HepG2 (cell line): ENCODE measurements at regions of chr22 and their contacts with region 1.

Region 1: GRCh38 chr22:37633625-37634416 is 5.6 kb upstream of the SH3BP1 start:
- DNase-seq: peak; percentile 85
- ATAC-seq: peak; percentile 67
- H3K4me3 ChIP-seq: peak overlapping the region; percentile 31 to 69 (median 51); a peak in 5 of 6 replicates
- H3K27ac ChIP-seq: peak overlapping the region; percentile 84
- H3K4me1 ChIP-seq: peaks cover 84% of the 10 kb centered on the region
- H3K27me3 ChIP-seq: no peaks in the 10 kb centered on the region
- CTCF ChIP-seq: peak; percentile 70
- EP300 ChIP-seq: peak in 1 of 2 experiments; percentile 4; a peak in 1 of 4 replicates
- POLR2A ChIP-seq: peak; percentile 51 to 76
- RAD21 ChIP-seq: 0 out of 2 replicates have a peak, but pooled peaks have one; percentile 15

Region 2: GRCh38 chr22:37623075-37624016 is 10.5 kb before region 1 on chr22:
- CTCF ChIA-PET with region 1: interaction called, 4 read pairs
- POLR2A ChIA-PET with region 1: interaction called, 4 read pairs
- in situ Hi-C with region 1: no loop called
- intact Hi-C with region 1: loop called (anchors 2 kb)
- DNase-seq: peak; percentile 50
- ATAC-seq: peak; percentile 73
- H3K4me3 ChIP-seq: 0 out of 6 replicates have a peak overlapping the region, but pooled peaks of 1 of the 3 experiments have one; percentile 3
- H3K27ac ChIP-seq: no peak overlapping the region
- H3K4me1 ChIP-seq: peaks cover 10% of the 10 kb centered on the region
- H3K27me3 ChIP-seq: no peaks in the 10 kb centered on the region; a peak in 1 of 5 replicates
- CTCF ChIP-seq: peak; percentile 78
- EP300 ChIP-seq: no peak
- POLR2A ChIP-seq: no peak
- RAD21 ChIP-seq: peak; percentile 71

Region 3: DNA sequence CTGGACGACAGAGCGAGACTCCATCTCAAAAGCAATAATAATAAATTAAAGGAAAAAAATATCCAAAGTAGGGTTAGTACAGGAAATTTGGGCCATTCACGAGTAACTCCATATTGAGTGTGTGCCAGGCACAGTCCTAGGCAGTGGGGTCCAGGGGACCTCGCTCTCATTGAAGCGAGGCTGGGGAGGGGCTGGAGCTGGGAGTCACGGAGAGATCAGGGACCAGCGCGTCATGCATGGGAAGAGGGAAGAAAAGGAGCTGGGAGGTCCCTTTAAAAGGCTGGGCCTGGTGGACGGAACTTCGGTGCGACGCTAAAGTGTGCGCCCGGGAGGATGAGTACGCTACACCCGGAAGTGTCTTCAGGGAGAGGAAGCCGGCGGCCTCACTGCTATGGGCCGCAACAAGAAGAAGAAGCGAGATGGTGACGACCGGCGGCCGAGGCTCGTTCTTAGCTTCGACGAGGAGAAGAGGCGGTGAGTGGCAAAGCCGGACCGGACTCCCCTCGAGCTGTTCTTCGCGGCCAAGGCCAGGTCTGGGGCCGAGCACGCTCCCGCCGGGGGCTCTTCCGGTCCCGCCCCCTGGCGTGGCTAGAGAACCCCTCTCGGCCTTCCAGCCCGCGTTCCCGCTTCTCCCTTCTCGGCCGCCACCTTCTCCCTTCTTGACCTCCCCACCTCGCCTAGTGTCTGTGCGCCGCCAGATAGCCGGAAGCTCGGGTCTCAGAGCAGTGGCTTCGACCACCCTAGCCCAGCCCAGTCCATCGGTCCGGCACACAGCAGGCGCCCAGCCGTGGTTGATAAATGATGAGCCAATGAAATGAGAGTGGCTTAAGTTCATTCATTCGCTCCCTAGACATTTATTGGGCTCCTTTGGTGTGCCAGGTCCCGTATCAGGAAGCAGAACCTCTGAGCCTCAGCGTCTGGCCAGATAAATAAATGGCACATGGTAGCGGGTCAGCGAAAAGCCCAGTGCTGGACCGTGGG is 52.5 kb after region 1 on chr22 and contains the start of gene NOL12:
- CTCF ChIA-PET with region 1: interaction called, 3 read pairs
- POLR2A ChIA-PET with region 1: interaction called, 11 read pairs
- in situ Hi-C with region 1: no loop called
- intact Hi-C with region 1: no loop called
- DNase-seq: peak; percentile 78
- ATAC-seq: peak; percentile 79
- H3K4me3 ChIP-seq: peak within 1 kb of the TSS; percentile 85 to 96 (median 93)
- H3K27ac ChIP-seq: peak within 1 kb of the TSS; percentile 82
- H3K4me1 ChIP-seq: peaks cover 41% of the 10 kb centered on the region
- H3K27me3 ChIP-seq: no peaks in the 10 kb centered on the region
- CTCF ChIP-seq: no peak
- EP300 ChIP-seq: 0 out of 4 replicates have a peak, but pooled peaks of 1 of the 2 experiments have one; percentile 24
- POLR2A ChIP-seq: peak; percentile 52 to 76; a peak in 3 of 4 replicates
- RAD21 ChIP-seq: peak; percentile 34
- total RNA-seq, gene NOL12: 27.5 and 31.4 TPM in 2 replicates

Region 4: DNA sequence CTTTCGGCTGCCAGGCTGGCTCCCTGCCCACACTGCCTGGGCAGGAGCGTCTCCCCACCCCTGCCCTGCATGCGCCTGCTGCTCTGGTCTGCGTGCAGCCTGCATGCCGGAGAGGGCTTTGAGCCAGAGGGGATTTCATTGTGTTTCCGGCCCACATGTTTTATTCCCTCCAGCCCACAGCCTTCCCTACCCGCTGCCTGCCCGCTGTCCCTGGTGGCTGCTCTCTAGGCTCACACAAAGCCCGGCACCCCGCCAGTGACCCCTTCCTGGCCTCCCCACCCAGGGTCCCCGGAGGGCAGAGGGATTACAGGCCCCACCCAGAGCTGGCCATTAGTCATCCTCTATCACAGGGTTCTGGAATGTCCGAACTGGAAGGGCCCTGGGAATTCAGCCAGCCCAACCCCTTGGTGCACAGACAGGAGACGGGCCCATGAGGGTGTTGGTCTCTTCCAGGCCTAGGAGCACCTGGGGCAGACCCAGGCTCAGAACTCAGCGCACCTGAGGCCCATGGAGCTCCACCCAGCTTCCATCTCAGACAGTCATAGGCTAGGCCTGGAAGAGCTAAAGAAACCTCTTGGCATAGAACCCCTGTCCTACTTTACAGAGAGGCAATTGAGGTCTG is 118.8 kb after region 1 on chr22:
- CTCF ChIA-PET with region 1: no interaction called
- POLR2A ChIA-PET with region 1: no interaction called
- in situ Hi-C with region 1: no loop called
- intact Hi-C with region 1: no loop called
- DNase-seq: peak; percentile 73
- ATAC-seq: peak; percentile 43
- H3K4me3 ChIP-seq: no peak overlapping the region
- H3K27ac ChIP-seq: peak overlapping the region; percentile 38
- H3K4me1 ChIP-seq: peaks cover 46% of the 10 kb centered on the region
- H3K27me3 ChIP-seq: no peaks in the 10 kb centered on the region
- CTCF ChIP-seq: no peak
- EP300 ChIP-seq: no peak
- POLR2A ChIP-seq: no peak
- RAD21 ChIP-seq: no peak

Region 5: DNA sequence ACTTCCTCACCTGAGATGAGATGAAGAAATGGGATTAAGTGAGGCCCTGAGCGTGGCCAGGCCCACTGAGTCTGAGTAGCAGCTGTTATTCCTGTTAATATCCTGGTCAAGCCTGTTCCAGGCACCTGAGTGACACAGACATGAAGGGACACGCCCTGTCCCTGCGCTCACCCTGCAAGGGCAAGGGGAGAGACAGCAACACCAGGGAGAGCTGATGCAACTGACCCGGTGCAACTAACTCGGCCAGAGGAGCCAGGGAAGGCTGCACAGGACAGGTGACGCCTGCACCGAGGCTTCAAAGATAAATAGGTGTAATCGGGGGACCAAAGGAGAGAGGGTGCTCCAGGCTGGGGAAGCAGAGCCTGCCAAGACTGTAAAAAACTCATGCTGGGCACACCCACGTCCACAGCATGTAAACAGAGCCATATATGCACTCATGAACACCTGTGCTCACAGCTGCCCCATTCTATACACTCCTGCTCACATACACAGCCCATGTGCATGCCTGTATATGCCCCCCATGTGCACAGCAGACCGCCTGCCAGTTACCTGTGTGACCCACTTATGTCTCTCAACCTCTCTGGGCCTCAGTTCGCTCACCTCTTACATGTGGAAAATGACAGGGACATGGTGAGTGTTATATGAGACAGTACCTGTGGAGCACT is 151.1 kb after region 1 on chr22:
- CTCF ChIA-PET with region 1: no interaction called
- POLR2A ChIA-PET with region 1: no interaction called
- in situ Hi-C with region 1: no loop called
- intact Hi-C with region 1: no loop called
- DNase-seq: peak; percentile 46
- ATAC-seq: peak; percentile 65
- H3K4me3 ChIP-seq: peak overlapping the region in 1 of 3 experiments; percentile 19; a peak in 1 of 6 replicates
- H3K27ac ChIP-seq: no peak overlapping the region
- H3K4me1 ChIP-seq: peaks cover 52% of the 10 kb centered on the region
- H3K27me3 ChIP-seq: no peaks in the 10 kb centered on the region
- CTCF ChIP-seq: no peak
- EP300 ChIP-seq: no peak
- POLR2A ChIP-seq: no peak
- RAD21 ChIP-seq: no peak

Region 6: DNA sequence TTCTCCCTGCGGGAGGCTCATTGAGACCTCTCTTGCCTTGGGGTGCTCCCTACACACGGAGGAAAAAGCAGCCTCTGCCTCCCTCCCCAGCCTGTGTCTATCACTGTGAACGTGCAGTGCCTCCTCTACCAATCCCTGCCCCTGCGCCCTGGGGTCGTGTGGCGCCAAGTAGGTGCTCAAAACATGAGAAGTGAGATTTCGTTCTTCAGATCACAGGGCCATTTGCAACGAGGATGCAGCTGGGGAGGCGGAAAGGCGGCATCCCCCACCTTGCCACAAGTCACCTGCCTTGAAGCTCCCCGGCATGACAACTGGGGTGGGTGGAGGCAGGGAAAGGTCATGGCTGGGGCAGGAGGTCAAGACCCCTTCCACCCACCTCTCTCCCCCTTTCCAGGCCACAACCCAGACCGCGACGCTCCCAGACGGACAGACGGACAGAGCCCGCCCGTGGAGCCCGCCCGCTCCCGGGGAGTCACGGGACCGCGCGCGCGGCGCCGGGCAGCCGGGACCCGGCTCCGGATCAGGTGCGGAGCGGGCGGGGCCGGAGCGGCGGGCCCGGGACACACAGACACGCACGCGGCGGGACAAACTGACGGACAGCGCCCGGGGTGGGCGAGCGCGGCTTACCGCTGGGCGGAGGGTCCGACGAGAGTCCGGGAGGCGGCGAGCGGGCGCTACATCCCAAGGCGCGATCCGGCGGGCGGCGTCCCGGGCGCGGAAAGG is 820.7 kb after region 1 on chr22:
- CTCF ChIA-PET with region 1: no interaction called
- POLR2A ChIA-PET with region 1: no interaction called
- in situ Hi-C with region 1: no loop called
- intact Hi-C with region 1: no loop called
- DNase-seq: no peak
- ATAC-seq: peak; percentile 23; the same call in 2 of the 3 replicates
- H3K4me3 ChIP-seq: peak overlapping the region; percentile 10 to 73 (median 21); a peak in 3 of 6 replicates
- H3K27ac ChIP-seq: no peak overlapping the region
- H3K4me1 ChIP-seq: peaks cover 18% of the 10 kb centered on the region
- H3K27me3 ChIP-seq: peaks cover 19 to 79% of the 10 kb centered on the region in 2 experiments
- CTCF ChIP-seq: no peak
- EP300 ChIP-seq: no peak
- POLR2A ChIP-seq: no peak
- RAD21 ChIP-seq: no peak